ENCODE measurements at regions of chr1 and their contacts with region 1.

Region 1: GRCh38 chr1:156480411-156481192 is 20.0 kb downstream of the MEF2D start:
- DNase-seq: peak; percentile 87
- H3K4me3 Mint-ChIP-seq: peak overlapping the region; percentile 5
- H3K27ac Mint-ChIP-seq: peak overlapping the region; percentile 81
- H3K4me1 Mint-ChIP-seq: peaks cover 54% of the 10 kb centered on the region
- H3K27me3 Mint-ChIP-seq: no peaks in the 10 kb centered on the region

Region 2: DNA sequence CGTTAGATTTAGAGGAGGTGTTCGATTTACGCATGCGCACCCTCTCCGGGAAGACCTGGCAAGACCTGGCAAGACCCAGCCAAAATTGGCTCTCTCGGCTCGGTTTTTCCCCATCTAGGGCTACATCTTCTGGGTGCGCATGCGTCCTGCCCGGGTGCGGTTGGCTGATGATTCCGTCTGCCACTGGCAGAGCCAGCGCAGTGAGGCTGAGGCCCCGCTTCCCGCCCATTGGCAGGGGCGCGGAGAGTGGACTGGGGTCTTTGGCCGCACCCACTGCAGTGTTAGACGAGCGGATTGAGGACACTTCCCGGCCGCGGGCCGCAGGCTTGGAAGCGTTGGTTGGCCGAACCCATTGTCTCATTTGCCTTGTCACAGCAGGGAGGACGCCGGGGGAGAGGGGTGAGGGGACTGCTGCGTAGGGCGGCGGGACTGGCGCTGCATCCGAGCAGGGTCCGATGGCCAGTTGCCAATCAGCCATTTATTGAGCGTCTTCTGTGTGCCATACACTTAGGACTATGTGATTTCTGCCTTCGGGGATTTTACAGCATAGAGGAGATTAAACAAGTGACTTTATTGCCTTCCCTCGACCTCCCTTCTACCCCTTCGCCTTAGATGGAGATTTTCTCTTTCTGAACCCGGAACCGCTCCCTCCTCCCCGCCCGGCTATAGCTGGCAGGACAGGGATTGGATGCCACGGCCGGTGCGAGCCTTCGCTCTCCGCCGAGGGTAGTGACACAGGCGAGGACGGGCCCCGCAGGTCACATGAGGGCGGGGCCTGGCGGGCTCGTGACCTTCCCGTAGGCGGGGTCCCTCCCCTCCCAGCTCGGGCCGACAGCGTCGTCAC is 23.8 kb before region 1 on chr1:
- CTCF ChIA-PET with region 1: interaction called, 9 read pairs
- intact Hi-C with region 1: loop called (anchors 1 kb)
- DNase-seq: peak; percentile 100
- H3K4me3 Mint-ChIP-seq: peak overlapping the region; percentile 86
- H3K27ac Mint-ChIP-seq: peak overlapping the region; percentile 97
- H3K4me1 Mint-ChIP-seq: peaks cover 10% of the 10 kb centered on the region
- H3K27me3 Mint-ChIP-seq: no peaks in the 10 kb centered on the region

Region 3: GRCh38 chr1:156515956-156516355 is 35.4 kb after region 1 on chr1:
- CTCF ChIA-PET with region 1: interaction called, 10 read pairs
- intact Hi-C with region 1: loop called (anchors 5 kb)
- DNase-seq: no peak
- H3K4me3 Mint-ChIP-seq: no peak overlapping the region
- H3K27ac Mint-ChIP-seq: no peak overlapping the region
- H3K4me1 Mint-ChIP-seq: peaks cover 8% of the 10 kb centered on the region
- H3K27me3 Mint-ChIP-seq: no peaks in the 10 kb centered on the region

Region 4: DNA sequence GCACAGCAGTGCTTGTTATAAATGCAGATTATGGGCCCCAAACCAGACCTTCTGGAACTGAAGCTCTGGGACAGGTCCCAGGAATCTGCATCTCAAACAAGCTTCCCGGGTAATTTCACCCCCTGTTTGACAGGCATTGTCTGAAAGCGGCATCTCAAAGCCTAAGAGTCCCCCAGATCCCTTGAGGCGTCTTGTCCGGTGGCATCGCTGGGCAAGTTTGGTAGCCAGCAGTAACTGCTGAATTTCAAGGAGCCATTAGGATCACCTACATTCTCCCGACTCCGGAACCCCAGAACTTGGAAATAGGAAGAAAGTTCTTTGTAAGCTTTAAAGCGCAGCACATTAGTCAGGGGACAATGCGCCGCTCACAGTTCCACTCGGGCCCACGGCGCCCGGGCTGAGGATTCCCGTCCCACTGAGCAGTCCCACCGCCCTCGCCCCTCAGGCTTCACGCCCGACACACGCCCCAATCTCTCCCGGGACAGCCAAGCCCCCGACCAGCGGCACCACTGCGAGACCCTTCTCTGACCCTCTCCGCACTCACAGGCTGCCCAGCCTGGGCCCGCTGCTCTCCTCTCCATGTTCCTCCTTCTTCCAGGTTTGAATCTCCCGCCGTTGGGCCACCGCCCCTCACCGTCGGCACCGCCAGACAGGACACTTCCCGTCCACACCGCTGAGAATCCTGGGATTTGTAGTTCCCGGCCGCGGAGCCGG is 91.5 kb after region 1 on chr1 and contains the start of gene IQGAP3:
- CTCF ChIA-PET with region 1: interaction called, 9 read pairs
- intact Hi-C with region 1: loop called (anchors 2 kb)
- DNase-seq: peak; percentile 79
- H3K4me3 Mint-ChIP-seq: peak within 1 kb of the TSS; percentile 93
- H3K27ac Mint-ChIP-seq: peak within 1 kb of the TSS; percentile 6
- H3K4me1 Mint-ChIP-seq: peaks cover 18% of the 10 kb centered on the region
- H3K27me3 Mint-ChIP-seq: peaks cover 30% of the 10 kb centered on the region
- total RNA-seq, gene IQGAP3: 9.4 to 10.6 TPM

Region 5: GRCh38 chr1:156608036-156608674 is 127.6 kb after region 1 on chr1:
- CTCF ChIA-PET with region 1: interaction called, 10 read pairs
- intact Hi-C with region 1: loop called (anchors 1 kb)
- DNase-seq: peak; percentile 85
- H3K4me3 Mint-ChIP-seq: no peak overlapping the region
- H3K27ac Mint-ChIP-seq: no peak overlapping the region
- H3K4me1 Mint-ChIP-seq: peaks cover 10% of the 10 kb centered on the region
- H3K27me3 Mint-ChIP-seq: peaks cover 2% of the 10 kb centered on the region

Region 6: DNA sequence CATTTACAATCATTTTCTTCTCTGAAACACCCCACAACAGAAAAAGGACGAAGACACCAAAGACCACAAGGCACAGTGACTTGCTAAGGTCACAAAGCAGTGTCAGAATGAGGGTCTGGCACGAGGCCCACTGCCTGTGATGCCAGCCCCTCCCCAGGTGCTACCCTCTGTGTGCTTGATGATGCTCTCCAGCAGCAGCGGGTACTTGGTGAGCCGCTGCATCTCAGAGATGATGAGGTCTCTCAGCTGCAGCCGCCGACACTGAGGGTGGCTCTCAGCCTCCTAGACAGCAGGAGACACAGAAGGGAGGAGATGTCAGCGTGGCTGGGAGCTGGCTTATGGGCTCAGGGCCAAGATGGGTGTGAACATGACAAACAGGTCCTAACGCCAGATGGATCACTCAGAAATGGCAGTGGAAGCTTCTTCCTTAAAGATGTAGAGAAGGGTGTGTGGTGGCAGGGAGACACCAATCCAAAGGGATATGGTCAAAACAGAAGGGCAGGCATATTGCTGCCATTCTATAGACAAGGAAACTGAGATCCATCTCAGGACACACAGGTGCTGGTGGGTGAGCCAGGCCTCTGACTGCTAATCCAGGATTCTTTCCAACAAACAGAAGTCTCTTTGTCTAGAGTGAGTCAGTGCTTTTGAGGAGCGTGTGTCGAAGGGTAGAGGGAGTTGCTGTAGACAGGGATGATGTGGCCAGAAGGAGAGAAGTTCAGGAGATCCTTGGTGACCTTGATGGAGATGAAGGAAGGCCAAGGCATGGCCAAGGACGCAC is 465.5 kb after region 1 on chr1:
- CTCF ChIA-PET with region 1: no interaction called
- intact Hi-C with region 1: no loop called
- DNase-seq: no peak
- H3K4me3 Mint-ChIP-seq: no peak overlapping the region
- H3K27ac Mint-ChIP-seq: no peak overlapping the region
- H3K4me1 Mint-ChIP-seq: no peaks in the 10 kb centered on the region
- H3K27me3 Mint-ChIP-seq: no peaks in the 10 kb centered on the region

Measured in activated naive CD4-positive, alpha-beta T cell treated with anti-CD3 and anti-CD28 coated beads for 36 hours (primary cell).